MCF 10A (cell line): ENCODE measurements at regions of chr19 and their contacts with region 1.

Region 1: GRCh38 chr19:35716801-35717666 is 769 bp upstream of the KMT2B start:
- DNase-seq: peak; percentile 97
- H3K4me3 Mint-ChIP-seq: peak overlapping the region; percentile 88
- H3K27ac Mint-ChIP-seq: peak overlapping the region; percentile 97
- H3K4me1 Mint-ChIP-seq: peaks cover 20% of the 10 kb centered on the region
- H3K27me3 Mint-ChIP-seq: no peaks in the 10 kb centered on the region
- CTCF ChIP-seq: peak; percentile 86

Region 2: DNA sequence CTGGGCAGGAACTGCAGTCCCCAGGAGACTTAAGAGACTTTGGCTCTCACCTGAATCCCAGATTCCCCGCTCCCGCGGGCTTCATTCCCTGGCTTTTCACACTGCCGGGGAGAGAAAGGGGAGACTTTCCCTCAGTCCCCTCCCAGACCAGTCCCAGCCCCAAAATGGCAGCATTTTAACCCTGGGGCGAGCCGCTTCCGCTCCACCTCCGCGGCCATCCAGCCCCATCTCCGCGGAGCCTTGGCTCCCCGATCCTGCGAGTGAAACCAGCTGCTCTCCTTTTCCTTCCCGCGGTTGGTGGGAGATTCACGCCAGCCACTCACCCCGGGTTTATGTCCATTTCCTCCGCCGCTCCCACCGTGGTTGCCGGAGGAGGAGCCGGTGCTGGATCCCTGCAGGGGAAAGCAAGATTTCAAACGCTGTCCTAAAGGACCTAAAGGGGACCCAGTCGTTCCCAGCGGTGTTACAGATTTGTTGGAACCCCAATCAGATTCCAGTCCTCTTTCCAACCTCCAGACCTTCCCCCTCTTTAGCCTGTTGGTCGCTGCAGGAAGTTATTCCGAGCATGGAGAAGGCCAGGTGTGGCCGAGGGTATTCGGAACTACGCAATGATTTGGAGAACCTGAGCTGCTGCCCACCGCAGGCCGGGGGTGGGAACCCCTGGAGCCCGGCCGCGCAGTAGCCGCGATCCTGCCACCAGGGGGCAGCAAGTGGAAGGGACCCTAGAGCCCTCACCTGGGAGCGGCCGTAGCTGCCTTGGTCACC is 207.0 kb before region 1 on chr19:
- CTCF ChIA-PET with region 1: no interaction called
- POLR2A ChIA-PET with region 1: no interaction called
- intact Hi-C with region 1: loop called (anchors 1 kb)
- DNase-seq: peak; percentile 88
- H3K4me3 Mint-ChIP-seq: peak overlapping the region; percentile 74
- H3K27ac Mint-ChIP-seq: peak overlapping the region; percentile 75
- H3K4me1 Mint-ChIP-seq: peaks cover 15% of the 10 kb centered on the region
- H3K27me3 Mint-ChIP-seq: no peaks in the 10 kb centered on the region
- CTCF ChIP-seq: peak; percentile 93

Region 3: GRCh38 chr19:35693830-35694599 is 23.0 kb before region 1 on chr19:
- CTCF ChIA-PET with region 1: interaction called, 6 read pairs
- POLR2A ChIA-PET with region 1: interaction called, 3 read pairs
- intact Hi-C with region 1: loop called (anchors 1 kb)
- DNase-seq: peak; percentile 93
- H3K4me3 Mint-ChIP-seq: no peak overlapping the region
- H3K27ac Mint-ChIP-seq: no peak overlapping the region
- H3K4me1 Mint-ChIP-seq: no peaks in the 10 kb centered on the region
- H3K27me3 Mint-ChIP-seq: no peaks in the 10 kb centered on the region
- CTCF ChIP-seq: peak; percentile 95

Region 4: GRCh38 chr19:35748106-35749020 is 31.3 kb after region 1 on chr19 and contains the start of gene LIN37:
- CTCF ChIA-PET with region 1: interaction called, 7 read pairs
- POLR2A ChIA-PET with region 1: interaction called, 8 read pairs
- intact Hi-C with region 1: loop called (anchors 1 kb)
- DNase-seq: peak; percentile 100
- H3K4me3 Mint-ChIP-seq: peak within 1 kb of the TSS; percentile 94
- H3K27ac Mint-ChIP-seq: peak within 1 kb of the TSS; percentile 87
- H3K4me1 Mint-ChIP-seq: peaks cover 27% of the 10 kb centered on the region
- H3K27me3 Mint-ChIP-seq: no peaks in the 10 kb centered on the region
- CTCF ChIP-seq: no peak
- total RNA-seq, gene LIN37: 19.6 and 24.6 TPM in 2 replicates